CD8-positive, alpha-beta T cell (primary cell): ENCODE measurements at regions of chr19 and their contacts with region 1.

Region 1: GRCh38 chr19:18117692-18118378 is 20.3 kb downstream of the MAST3 start:
- DNase-seq: peak; percentile 91 to 99 (median 96)
- ATAC-seq: peak; percentile 80
- H3K4me3 ChIP-seq: peak overlapping the region; percentile 58 to 85
- H3K4me3 Mint-ChIP-seq: peak overlapping the region; percentile 88
- H3K27ac ChIP-seq: peak overlapping the region; percentile 66 to 70
- H3K27ac Mint-ChIP-seq: peak overlapping the region; percentile 96
- H3K4me1 ChIP-seq: peaks cover 32% of the 10 kb centered on the region
- H3K4me1 Mint-ChIP-seq: peaks cover 38% of the 10 kb centered on the region
- H3K27me3 ChIP-seq: no peaks in the 10 kb centered on the region
- H3K27me3 Mint-ChIP-seq: no peaks in the 10 kb centered on the region
- CTCF ChIP-seq: no peak

Region 2: GRCh38 chr19:17747205-17748098 is 370.4 kb before region 1 on chr19:
- CTCF ChIA-PET with region 1: no interaction called
- POLR2A ChIA-PET with region 1: no interaction called
- intact Hi-C with region 1: loop called in 1 of 2 experiments (anchors 2 kb)
- DNase-seq: peak; percentile 85 to 98 (median 93)
- ATAC-seq: peak; percentile 87
- H3K4me3 ChIP-seq: peak overlapping the region; percentile 57 to 63
- H3K4me3 Mint-ChIP-seq: peak overlapping the region; percentile 89
- H3K27ac ChIP-seq: peak overlapping the region in 1 of 2 experiments; percentile 46
- H3K27ac Mint-ChIP-seq: peak overlapping the region; percentile 45
- H3K4me1 ChIP-seq: peaks cover 50% of the 10 kb centered on the region
- H3K4me1 Mint-ChIP-seq: peaks cover 46% of the 10 kb centered on the region
- H3K27me3 ChIP-seq: no peaks in the 10 kb centered on the region
- H3K27me3 Mint-ChIP-seq: no peaks in the 10 kb centered on the region
- CTCF ChIP-seq: no peak

Region 3: GRCh38 chr19:18058208-18059030 is 59.4 kb before region 1 on chr19:
- CTCF ChIA-PET with region 1: interaction called, 18 read pairs
- POLR2A ChIA-PET with region 1: no interaction called
- intact Hi-C with region 1: no loop called
- DNase-seq: peak; percentile 67 to 92 (median 83)
- ATAC-seq: peak; percentile 98
- H3K4me3 ChIP-seq: peak overlapping the region in 1 of 2 experiments; percentile 23
- H3K4me3 Mint-ChIP-seq: peak overlapping the region; percentile 18
- H3K27ac ChIP-seq: peak overlapping the region; percentile 35 to 60
- H3K27ac Mint-ChIP-seq: peak overlapping the region; percentile 86
- H3K4me1 ChIP-seq: peaks cover 17% of the 10 kb centered on the region
- H3K4me1 Mint-ChIP-seq: peaks cover 12% of the 10 kb centered on the region
- H3K27me3 ChIP-seq: no peaks in the 10 kb centered on the region
- H3K27me3 Mint-ChIP-seq: no peaks in the 10 kb centered on the region
- CTCF ChIP-seq: peak; percentile 95

Region 4: GRCh38 chr19:18091217-18091608 is 26.6 kb before region 1 on chr19:
- CTCF ChIA-PET with region 1: interaction called, 20 read pairs
- POLR2A ChIA-PET with region 1: interaction called, 15 read pairs
- intact Hi-C with region 1: no loop called
- DNase-seq: peak; percentile 54 to 94 (median 82)
- ATAC-seq: peak; percentile 61
- H3K4me3 ChIP-seq: peak overlapping the region in 1 of 2 experiments; percentile 3
- H3K4me3 Mint-ChIP-seq: peak overlapping the region; percentile 56
- H3K27ac ChIP-seq: peak overlapping the region; percentile 54 to 97
- H3K27ac Mint-ChIP-seq: peak overlapping the region; percentile 97
- H3K4me1 ChIP-seq: peaks cover 68% of the 10 kb centered on the region
- H3K4me1 Mint-ChIP-seq: peaks cover 68% of the 10 kb centered on the region
- H3K27me3 ChIP-seq: no peaks in the 10 kb centered on the region
- H3K27me3 Mint-ChIP-seq: no peaks in the 10 kb centered on the region
- CTCF ChIP-seq: no peak

Region 5: GRCh38 chr19:18152444-18152816 is 34.6 kb after region 1 on chr19:
- CTCF ChIA-PET with region 1: interaction called, 20 read pairs
- POLR2A ChIA-PET with region 1: interaction called, 27 read pairs
- intact Hi-C with region 1: loop called (anchors 1 kb)
- DNase-seq: peak; percentile 94 to 99 (median 99)
- ATAC-seq: peak; percentile 65
- H3K4me3 ChIP-seq: peak overlapping the region; percentile 66 to 71
- H3K4me3 Mint-ChIP-seq: peak overlapping the region; percentile 84
- H3K27ac ChIP-seq: peak overlapping the region; percentile 66 to 87
- H3K27ac Mint-ChIP-seq: peak overlapping the region; percentile 95
- H3K4me1 ChIP-seq: peaks cover 17% of the 10 kb centered on the region
- H3K4me1 Mint-ChIP-seq: peaks cover 23% of the 10 kb centered on the region
- H3K27me3 ChIP-seq: no peaks in the 10 kb centered on the region
- H3K27me3 Mint-ChIP-seq: no peaks in the 10 kb centered on the region
- CTCF ChIP-seq: peak; percentile 87

Region 6: DNA sequence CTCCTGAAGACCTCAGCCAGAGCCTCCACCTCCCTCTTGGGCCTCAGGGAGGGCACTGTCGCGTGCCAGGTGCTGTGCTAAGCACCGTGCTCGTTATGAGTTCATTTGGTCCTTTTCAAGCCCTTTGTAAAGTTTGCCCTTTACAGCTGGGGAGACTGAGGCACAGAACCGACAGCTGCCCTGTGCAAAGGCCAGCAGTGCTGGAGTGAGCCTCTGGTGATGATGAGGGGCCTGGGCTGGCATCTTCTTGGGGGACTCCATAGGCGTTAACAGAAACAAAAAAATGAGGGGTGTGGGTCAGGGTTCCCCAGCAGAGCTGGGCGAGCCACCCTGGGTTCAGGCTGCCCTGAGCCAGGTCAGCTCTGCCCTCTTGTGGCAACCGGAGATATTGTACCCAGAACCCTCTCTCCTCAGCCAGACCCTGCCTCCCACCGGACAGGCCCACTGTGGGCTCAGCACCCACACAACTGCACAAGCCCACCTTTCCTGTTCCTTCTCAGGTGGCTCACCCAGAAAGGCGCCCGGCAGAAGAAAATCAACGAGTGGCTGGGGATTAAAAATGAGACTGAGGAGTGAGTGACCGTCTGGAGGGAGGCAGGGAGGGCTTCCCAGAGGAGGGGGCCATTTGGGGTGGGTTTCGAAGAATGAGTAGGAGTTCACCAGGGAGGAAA is 50.3 kb after region 1 on chr19:
- CTCF ChIA-PET with region 1: interaction called, 39 read pairs
- POLR2A ChIA-PET with region 1: interaction called, 6 read pairs
- intact Hi-C with region 1: loop called in 1 of 2 experiments (anchors 1 kb)
- DNase-seq: peak in 8 of 9 experiments; percentile 44 to 77 (median 64)
- ATAC-seq: peak; percentile 98
- H3K4me3 ChIP-seq: no peak overlapping the region
- H3K4me3 Mint-ChIP-seq: no peak overlapping the region
- H3K27ac ChIP-seq: no peak overlapping the region
- H3K27ac Mint-ChIP-seq: no peak overlapping the region
- H3K4me1 ChIP-seq: peaks cover 6% of the 10 kb centered on the region
- H3K4me1 Mint-ChIP-seq: peaks cover 2% of the 10 kb centered on the region
- H3K27me3 ChIP-seq: no peaks in the 10 kb centered on the region
- H3K27me3 Mint-ChIP-seq: no peaks in the 10 kb centered on the region
- CTCF ChIP-seq: peak; percentile 69

Region 7: DNA sequence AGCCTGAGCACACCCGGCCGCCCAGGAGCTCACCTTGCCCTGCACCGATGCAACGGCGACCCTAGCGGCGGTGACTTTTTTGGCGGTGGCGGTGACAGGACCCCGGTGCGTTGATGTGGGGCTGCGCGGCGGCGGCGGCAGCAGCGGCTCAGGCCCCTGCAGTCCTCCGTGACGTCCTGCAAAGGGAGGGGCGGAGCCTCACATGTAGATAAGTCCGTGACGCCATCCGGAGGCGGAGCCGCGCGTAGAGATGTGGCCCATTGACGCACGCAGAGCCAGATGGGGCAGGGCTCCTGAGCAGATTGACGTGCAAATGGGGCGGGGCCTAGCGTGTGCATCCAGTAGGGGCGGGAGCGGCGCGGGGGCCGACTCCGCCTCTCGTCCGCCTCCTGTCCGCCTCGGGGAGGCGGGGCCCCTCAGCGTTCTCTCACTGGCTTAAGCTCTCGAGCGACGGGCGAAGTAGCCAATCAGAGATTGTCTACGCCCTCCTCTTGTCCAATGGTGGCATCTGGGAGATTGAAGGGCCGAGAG is 86.1 kb after region 1 on chr19 and contains the start of gene RAB3A:
- CTCF ChIA-PET with region 1: interaction called, 4 read pairs
- POLR2A ChIA-PET with region 1: no interaction called
- intact Hi-C with region 1: loop called in 1 of 2 experiments (anchors 1 kb)
- DNase-seq: peak; percentile 98 to 100 (median 100)
- ATAC-seq: peak; percentile 90
- H3K4me3 ChIP-seq: peak within 1 kb of the TSS; percentile 60 to 91
- H3K4me3 Mint-ChIP-seq: peak within 1 kb of the TSS; percentile 96
- H3K27ac ChIP-seq: peak within 1 kb of the TSS; percentile 76 to 81
- H3K27ac Mint-ChIP-seq: peak within 1 kb of the TSS; percentile 96
- H3K4me1 ChIP-seq: peaks cover 17% of the 10 kb centered on the region
- H3K4me1 Mint-ChIP-seq: peaks cover 21% of the 10 kb centered on the region
- H3K27me3 ChIP-seq: no peaks in the 10 kb centered on the region
- H3K27me3 Mint-ChIP-seq: peaks cover 5% of the 10 kb centered on the region
- CTCF ChIP-seq: no peak
- total RNA-seq, gene RAB3A: 16.8 to 19.4 TPM